ENCODE measurements at regions of chr11 and their contacts with region 1.

Region 1: GRCh38 chr11:108501396-108501795 is 3.2 kb upstream of the POGLUT3 start:
- DNase-seq: no peak
- H3K4me3 ChIP-seq: no peak overlapping the region
- H3K27ac ChIP-seq: no peak overlapping the region
- H3K4me1 ChIP-seq: no peaks in the 10 kb centered on the region
- H3K27me3 ChIP-seq: no peaks in the 10 kb centered on the region
- CTCF ChIP-seq: no peak
- POLR2A ChIP-seq: no peak

Region 2: DNA sequence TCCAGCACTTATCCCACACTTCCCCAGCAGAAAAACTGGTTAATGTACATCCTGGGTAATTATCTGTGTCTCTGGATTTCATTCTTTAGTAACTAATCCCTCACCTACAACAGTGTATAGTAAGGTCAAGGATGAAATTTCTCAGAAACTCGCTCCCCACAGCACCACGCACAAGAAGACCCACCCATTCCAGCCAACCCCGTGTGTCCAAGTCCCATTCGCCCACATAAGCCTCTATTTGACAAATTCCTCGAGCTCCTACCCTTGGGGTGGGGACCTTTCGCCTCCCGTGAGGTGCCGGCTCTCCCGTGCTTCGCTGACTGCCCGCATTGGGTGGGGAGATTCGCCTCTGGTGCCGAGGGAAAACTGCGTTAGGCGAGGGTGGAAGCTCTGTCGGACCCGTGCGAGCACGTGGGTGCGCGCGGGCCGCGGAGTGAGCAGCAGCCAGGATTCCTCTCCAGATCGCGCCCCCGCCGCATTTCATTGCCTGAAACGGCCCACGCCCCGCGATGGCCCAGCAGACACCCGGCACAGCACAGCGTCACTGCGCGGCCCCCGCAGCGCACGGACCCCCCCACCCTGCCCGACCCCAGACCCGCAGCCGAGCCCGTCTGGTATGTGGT is 91.3 kb after region 1 on chr11:
- intact Hi-C with region 1: no loop called
- DNase-seq: peak; percentile 27
- H3K4me3 ChIP-seq: peak overlapping the region; percentile 46 to 59
- H3K27ac ChIP-seq: no peak overlapping the region
- H3K4me1 ChIP-seq: no peaks in the 10 kb centered on the region
- H3K27me3 ChIP-seq: no peaks in the 10 kb centered on the region
- CTCF ChIP-seq: no peak
- POLR2A ChIP-seq: no peak

Region 3: GRCh38 chr11:108654994-108655631 is 153.7 kb after region 1 on chr11:
- intact Hi-C with region 1: loop called (anchors 10 kb)
- DNase-seq: peak; percentile 59
- H3K4me3 ChIP-seq: no peak overlapping the region
- H3K27ac ChIP-seq: no peak overlapping the region
- H3K4me1 ChIP-seq: no peaks in the 10 kb centered on the region
- H3K27me3 ChIP-seq: no peaks in the 10 kb centered on the region
- CTCF ChIP-seq: peak in 2 of 3 experiments; percentile 47 to 49
- POLR2A ChIP-seq: no peak